ENCODE measurements at regions of chr18 and their contacts with region 1.

Region 1: DNA sequence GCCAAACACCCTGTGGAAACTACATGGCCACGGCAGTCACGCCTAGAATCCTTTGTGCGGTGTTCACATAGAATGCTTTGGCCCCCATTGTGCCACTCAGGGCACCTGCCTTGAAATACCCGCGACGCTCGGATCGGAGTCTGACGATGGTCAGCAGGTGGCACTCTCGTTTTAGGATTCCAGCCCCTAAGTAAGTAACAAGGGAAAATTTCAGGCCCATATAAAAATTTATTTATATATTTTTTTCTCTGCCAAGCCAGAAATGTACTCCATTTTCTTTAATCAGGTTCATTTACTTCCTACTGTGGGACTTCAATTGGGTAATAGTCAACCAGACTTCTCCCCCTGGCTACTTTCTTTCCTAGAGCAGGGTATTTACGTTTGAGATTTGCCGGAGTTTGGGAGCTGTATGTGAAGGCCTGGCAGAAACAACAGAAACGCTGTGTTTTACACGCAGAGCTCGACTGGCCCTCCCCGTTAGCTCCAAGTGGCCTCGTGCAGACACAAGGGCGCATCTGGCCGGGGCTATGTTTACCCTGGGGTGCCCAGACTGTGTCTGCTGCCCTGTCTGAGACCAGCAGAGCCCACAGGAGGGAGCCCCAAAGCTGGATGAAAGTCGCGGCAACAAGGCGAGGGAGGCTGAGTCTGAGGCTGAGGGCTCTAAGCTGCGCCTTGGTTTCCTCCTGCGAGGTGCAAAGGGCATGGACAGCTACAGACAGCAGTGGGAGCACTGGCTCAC is 41.6 kb downstream of the LRRC30 start:
- DNase-seq: no peak
- H3K4me3 ChIP-seq: no peak overlapping the region
- H3K27ac ChIP-seq: peak overlapping the region; percentile 31
- H3K4me1 ChIP-seq: peaks cover 19% of the 10 kb centered on the region
- H3K27me3 ChIP-seq: no peaks in the 10 kb centered on the region
- CTCF ChIP-seq: peak; percentile 3 to 30 (median 20)
- POLR2A ChIP-seq: no peak

Region 2: DNA sequence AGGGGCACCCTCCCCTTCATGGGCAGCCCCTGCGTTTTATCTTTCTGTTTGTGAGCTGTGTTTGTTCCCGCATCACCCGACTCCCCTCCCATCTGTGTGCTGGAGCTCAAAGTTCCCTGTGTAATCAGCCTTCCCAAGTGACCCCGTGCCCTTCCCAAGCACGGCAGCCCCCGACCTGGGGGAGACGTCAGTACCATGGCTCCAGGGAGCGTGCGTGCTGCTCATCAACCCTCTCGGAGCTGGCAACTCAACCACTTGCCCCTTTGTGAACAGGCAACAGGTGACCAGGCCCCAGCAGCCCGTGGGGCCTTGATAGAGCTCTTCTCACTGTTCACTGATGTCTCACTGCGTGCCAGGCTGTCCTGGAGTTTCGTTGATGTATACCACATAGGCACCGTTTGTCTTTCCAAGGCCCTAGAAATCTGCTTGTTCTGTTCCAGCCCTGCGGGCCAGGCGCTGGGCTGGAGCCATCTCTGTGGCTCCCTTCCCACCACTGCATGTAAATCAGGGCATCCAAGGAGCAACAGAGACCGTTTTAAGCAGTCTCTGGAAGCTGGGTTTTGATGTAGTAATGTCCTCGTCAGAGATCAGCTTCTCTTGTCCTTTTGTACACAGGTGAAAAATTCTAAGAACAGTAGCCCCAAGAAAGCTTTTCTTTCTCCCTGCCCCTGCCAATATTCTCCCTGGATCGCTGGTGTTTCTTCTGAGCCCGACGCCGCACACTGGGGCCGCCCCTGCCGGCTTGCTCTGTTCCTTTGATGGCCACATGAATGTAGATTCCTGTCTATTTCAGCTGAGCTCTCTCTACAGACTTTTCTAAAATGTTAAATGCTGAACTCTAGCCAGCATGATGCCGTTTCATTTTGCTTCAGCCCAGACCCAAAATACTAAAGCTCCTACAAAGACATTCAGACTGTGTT is 187.6 kb after region 1 on chr18:
- intact Hi-C with region 1: no loop called
- DNase-seq: no peak
- H3K4me3 ChIP-seq: peak overlapping the region; percentile 25 to 28
- H3K27ac ChIP-seq: peak overlapping the region; percentile 62
- H3K4me1 ChIP-seq: peaks cover 11% of the 10 kb centered on the region
- H3K27me3 ChIP-seq: no peaks in the 10 kb centered on the region
- CTCF ChIP-seq: no peak
- POLR2A ChIP-seq: no peak

Region 3: DNA sequence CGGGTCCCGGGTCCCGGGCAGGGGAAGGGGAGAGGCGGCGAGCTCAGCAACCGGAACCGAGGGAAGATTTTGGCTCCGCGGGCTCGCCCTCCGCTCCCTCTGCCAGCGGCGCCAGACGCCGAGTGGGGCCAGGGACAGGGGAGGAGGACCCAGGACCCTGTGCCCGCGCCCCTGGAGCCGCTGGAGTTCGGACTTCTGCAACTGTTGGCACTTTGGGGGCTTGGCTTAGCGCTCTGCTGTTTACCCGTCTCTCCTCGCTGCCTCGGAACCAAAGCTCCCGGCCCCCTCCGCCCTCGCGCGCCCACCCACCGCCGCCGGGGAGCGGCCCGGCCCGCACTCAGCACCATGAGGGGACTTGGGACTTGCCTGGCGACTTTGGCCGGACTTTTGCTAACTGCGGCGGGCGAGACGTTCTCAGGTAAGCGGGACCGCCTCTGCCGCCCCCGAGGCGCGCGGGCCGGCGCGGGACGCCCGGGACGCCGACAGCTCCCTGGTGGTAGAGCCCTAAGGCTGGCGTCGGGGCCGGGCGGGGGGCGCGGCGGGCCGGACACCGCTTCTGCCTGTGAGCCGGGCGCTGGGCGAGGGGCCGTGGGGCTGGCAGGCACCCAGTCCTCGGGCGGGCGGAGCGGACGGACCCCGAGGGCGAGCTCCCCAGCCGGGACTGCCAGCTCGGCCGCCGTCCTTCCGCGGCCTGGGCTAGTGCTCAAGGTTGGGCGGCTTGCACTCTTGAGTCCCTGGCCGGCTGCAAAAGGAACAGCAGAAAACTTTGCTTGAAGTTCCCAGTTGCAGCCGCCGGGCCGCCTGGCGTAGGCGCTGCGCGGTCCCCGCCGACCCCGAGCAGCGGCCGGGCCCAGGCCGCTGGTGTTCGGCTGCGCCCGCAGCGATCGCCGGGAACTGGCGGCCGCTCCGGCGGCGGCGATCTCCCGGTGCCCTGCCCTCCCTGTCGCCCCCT is 295.3 kb after region 1 on chr18:
- intact Hi-C with region 1: loop called (anchors 2 kb)
- DNase-seq: no peak
- H3K4me3 ChIP-seq: peak overlapping the region; percentile 84 to 87
- H3K27ac ChIP-seq: peak overlapping the region; percentile 98
- H3K4me1 ChIP-seq: peaks cover 21% of the 10 kb centered on the region
- H3K27me3 ChIP-seq: no peaks in the 10 kb centered on the region
- CTCF ChIP-seq: peak in 1 of 3 experiments; percentile 3
- POLR2A ChIP-seq: no peak